Naive thymus-derived CD8-positive, alpha-beta T cell (primary cell): ENCODE measurements at regions of chr14 and their contacts with region 1.

Region 1: DNA sequence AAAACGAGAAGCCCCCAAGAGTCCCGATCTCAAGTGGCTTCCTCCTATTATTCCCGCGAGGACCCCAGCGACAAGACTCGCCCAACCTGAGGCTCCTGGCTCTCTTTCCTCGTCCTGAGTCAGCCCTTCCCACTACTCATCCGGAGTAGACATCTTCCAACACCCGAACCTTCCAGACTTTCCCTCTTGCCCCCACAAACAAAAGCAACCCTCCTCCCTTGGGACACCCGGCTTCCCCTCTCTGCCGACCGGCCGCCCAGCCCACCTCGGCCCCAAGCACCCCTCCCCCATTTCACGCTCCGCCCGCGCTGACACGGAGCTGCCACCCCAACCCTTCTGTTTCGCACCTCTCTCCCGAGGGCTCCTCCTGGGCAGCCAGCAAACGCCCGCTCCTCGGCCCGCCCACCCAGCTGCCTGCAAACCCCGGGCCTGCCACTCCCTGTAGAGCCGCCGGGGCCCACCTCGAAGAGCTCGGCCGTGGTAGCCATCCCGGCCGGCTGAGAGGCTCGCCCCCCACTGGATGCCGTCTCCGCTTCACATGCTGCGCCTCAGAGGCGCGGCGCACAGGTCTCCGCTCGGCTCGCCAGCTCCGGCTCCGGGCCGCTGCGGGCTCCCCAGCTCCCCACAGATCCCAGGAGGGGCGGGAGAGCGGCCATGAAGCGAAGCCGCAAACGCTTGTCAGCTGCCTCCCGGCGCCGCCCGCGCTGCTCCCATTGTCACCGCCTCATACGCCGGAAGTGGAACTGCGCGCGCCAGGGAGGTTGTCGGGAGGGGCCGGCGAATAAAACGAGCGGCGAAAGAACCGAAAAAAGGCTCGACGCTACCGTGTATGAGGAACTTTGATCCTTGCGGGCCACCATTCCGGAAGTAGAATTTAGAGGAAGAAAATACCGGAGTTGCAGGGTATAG is at the starts of genes AP5M1 and EXOC5:
- DNase-seq: peak; percentile 82 to 95 (median 92)
- ATAC-seq: peak; percentile 84 to 85
- H3K4me3 Mint-ChIP-seq: peak within 1 kb of the TSS; percentile 97 to 100 (median 99)
- H3K27ac Mint-ChIP-seq: peak within 1 kb of the TSS; percentile 98 to 99 (median 99)
- H3K4me1 Mint-ChIP-seq: peaks cover 29 to 82% (median 70%) of the 10 kb centered on the region in 4 donors
- H3K27me3 Mint-ChIP-seq: no peaks in the 10 kb centered on the region
- polyA plus RNA-seq, gene AP5M1: 33.1 to 39.8 (median 36.7) TPM
- polyA plus RNA-seq, gene EXOC5: 42.1 to 50.1 (median 45.4) TPM

Region 2: GRCh38 chr14:56579345-56580220 is 688.8 kb before region 1 on chr14 and contains the start of gene TMEM260:
- POLR2A ChIA-PET with region 1: interaction called, 11 read pairs
- DNase-seq: peak; percentile 81 to 98 (median 90)
- ATAC-seq: peak; percentile 89
- H3K4me3 Mint-ChIP-seq: peak within 1 kb of the TSS; percentile 87 to 98 (median 94)
- H3K27ac Mint-ChIP-seq: peak within 1 kb of the TSS; percentile 79 to 98 (median 95)
- H3K4me1 Mint-ChIP-seq: peaks cover 26 to 48% (median 45%) of the 10 kb centered on the region in 4 donors
- H3K27me3 Mint-ChIP-seq: no peaks in the 10 kb centered on the region
- polyA plus RNA-seq, gene TMEM260: 8.9 to 12.2 (median 10.7) TPM

Region 3: GRCh38 chr14:57293866-57294837 is 25.7 kb after region 1 on chr14:
- POLR2A ChIA-PET with region 1: no interaction called
- DNase-seq: no peak
- ATAC-seq: no peak
- H3K4me3 Mint-ChIP-seq: no peak overlapping the region
- H3K27ac Mint-ChIP-seq: no peak overlapping the region
- H3K4me1 Mint-ChIP-seq: no peaks in the 10 kb centered on the region
- H3K27me3 Mint-ChIP-seq: no peaks in the 10 kb centered on the region

Region 4: GRCh38 chr14:57390028-57390805 is 121.8 kb after region 1 on chr14 and contains the start of gene NAA30:
- POLR2A ChIA-PET with region 1: interaction called, 20 read pairs
- DNase-seq: peak; percentile 83 to 98 (median 94)
- ATAC-seq: peak; percentile 86 to 88
- H3K4me3 Mint-ChIP-seq: peak within 1 kb of the TSS; percentile 85 to 98 (median 94)
- H3K27ac Mint-ChIP-seq: peak within 1 kb of the TSS; percentile 91 to 98 (median 94)
- H3K4me1 Mint-ChIP-seq: peaks cover 16 to 48% (median 43%) of the 10 kb centered on the region in 4 donors
- H3K27me3 Mint-ChIP-seq: no peaks in the 10 kb centered on the region
- polyA plus RNA-seq, gene NAA30: 6.9 to 12.3 (median 7.8) TPM